Gastrocnemius medialis (tissue), 4 donors: ENCODE measurements at regions of chr9 and their contacts with region 1.

Region 1: GRCh38 chr9:107489687-107490605 is at the start of gene KLF4:
- DNase-seq: peak; percentile 89 to 91
- ATAC-seq: peak; percentile 82 to 84
- H3K4me3 ChIP-seq: peak within 1 kb of the TSS; percentile 75 to 91 (median 82)
- H3K27ac ChIP-seq: peak within 1 kb of the TSS; percentile 82 to 90 (median 90)
- H3K4me1 ChIP-seq: peaks cover 8 to 9% of the 10 kb centered on the region in 2 donors
- H3K27me3 ChIP-seq: no peaks in the 10 kb centered on the region
- CTCF ChIP-seq: no peak
- POLR2A ChIP-seq: peak; percentile 94 to 95
- total RNA-seq, gene KLF4: 15.7 to 62.6 (median 32.4) TPM

Region 2: DNA sequence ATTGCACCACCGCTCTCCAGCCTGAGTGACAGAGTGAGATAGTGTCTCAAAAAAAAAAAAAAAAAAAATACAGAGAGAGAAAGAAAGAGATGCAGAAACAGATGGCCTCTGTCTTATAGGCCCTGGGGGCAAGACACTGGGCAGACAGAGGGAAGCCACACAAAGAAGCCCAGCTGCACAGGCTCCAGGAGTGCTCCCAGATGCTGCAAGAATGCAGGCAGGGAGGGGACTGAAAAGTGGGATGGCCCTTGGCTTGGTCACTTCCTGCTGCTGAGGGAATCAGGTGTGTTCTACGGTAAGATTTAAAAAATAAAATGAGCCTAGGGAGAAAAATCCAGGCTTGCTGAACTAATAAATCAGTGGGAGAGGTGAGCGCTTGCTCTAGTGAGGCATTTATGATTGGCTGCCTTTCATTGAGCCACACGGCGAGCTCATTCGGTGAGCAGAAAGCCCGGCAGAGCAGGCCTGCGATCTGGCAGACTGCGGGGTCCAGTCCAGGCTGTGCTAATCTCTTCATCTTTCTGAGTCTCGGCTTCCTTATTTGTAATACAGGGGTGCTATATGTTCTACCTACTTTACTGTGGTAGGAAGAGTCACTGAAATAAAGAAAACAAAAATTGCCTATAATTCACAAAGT is 126.3 kb before region 1 on chr9:
- in situ Hi-C with region 1: no loop called
- intact Hi-C with region 1: no loop called
- DNase-seq: no peak
- ATAC-seq: no peak
- H3K4me3 ChIP-seq: no peak overlapping the region
- H3K27ac ChIP-seq: no peak overlapping the region
- H3K4me1 ChIP-seq: no peaks in the 10 kb centered on the region
- H3K27me3 ChIP-seq: no peaks in the 10 kb centered on the region
- CTCF ChIP-seq: no peak
- POLR2A ChIP-seq: no peak

Region 3: GRCh38 chr9:107409581-107410387 is 80.2 kb before region 1 on chr9:
- in situ Hi-C with region 1: no loop called
- intact Hi-C with region 1: no loop called
- DNase-seq: no peak
- ATAC-seq: no peak
- H3K4me3 ChIP-seq: no peak overlapping the region
- H3K27ac ChIP-seq: no peak overlapping the region
- H3K4me1 ChIP-seq: no peaks in the 10 kb centered on the region
- H3K27me3 ChIP-seq: no peaks in the 10 kb centered on the region
- CTCF ChIP-seq: no peak
- POLR2A ChIP-seq: no peak

Region 4: GRCh38 chr9:107637421-107638420 is 147.8 kb after region 1 on chr9:
- in situ Hi-C with region 1: loop called in 3 of 4 experiments (anchors 5 to 25 kb)
- intact Hi-C with region 1: loop called (anchors 1 kb)
- DNase-seq: peak; percentile 87 to 93
- ATAC-seq: peak; percentile 89 to 91
- H3K4me3 ChIP-seq: peak overlapping the region; percentile 56 to 65 (median 56)
- H3K27ac ChIP-seq: peak overlapping the region; percentile 94 to 97 (median 96)
- H3K4me1 ChIP-seq: peaks cover 18 to 19% of the 10 kb centered on the region in 2 donors
- H3K27me3 ChIP-seq: no peaks in the 10 kb centered on the region
- CTCF ChIP-seq: peak; percentile 22 to 44 (median 27)
- POLR2A ChIP-seq: peak; percentile 98 to 99

Region 5: DNA sequence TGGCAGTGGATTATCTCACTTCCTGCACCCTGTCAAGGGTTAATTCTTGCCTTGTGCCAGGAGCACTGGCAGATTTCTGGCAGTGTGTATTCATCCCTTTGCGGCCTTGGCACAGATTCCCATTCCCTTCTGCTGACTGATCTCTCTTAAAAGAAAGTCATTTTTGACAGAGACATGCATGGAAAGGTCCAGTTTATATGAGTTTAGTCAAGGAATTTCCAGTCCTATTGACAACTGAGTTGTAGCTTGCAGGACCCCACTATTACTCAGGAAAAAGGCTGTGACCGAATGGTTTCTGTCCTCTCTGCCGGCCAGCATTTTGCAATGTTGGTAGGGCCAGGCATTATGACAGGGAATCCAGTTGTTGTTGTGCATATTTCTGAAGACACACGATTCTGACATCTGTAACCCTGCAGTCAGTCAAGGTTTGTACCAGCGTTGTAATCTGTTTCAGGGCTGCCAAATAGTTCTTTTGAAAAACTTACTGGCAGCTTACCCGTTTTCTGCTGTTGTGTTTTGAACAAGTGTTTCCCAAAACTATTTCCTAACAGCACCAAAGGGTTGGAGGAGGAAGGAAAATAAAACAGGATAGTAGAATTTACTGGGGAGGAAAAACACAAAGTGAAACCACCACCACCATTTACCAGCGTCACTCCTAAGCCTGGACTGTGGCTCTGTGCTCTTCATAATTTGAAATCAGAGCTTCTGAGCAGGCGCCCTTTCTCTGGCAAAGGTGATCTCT is 243.0 kb after region 1 on chr9:
- in situ Hi-C with region 1: loop called (anchors 25 kb)
- intact Hi-C with region 1: loop called (anchors 2 kb)
- DNase-seq: peak; percentile 54 to 75
- ATAC-seq: peak; percentile 79 to 82
- H3K4me3 ChIP-seq: peak overlapping the region; percentile 32 to 42 (median 36)
- H3K27ac ChIP-seq: peak overlapping the region; percentile 78 to 88 (median 86)
- H3K4me1 ChIP-seq: peaks cover 17 to 19% of the 10 kb centered on the region in 2 donors
- H3K27me3 ChIP-seq: no peaks in the 10 kb centered on the region
- CTCF ChIP-seq: no peak
- POLR2A ChIP-seq: no peak

Region 6: GRCh38 chr9:108053555-108054061 is 563.7 kb after region 1 on chr9:
- in situ Hi-C with region 1: no loop called
- intact Hi-C with region 1: loop called (anchors 5 kb)
- DNase-seq: peak; percentile 68 to 73
- ATAC-seq: peak; percentile 72 to 84
- H3K4me3 ChIP-seq: peak overlapping the region; percentile 7 to 48 (median 22)
- H3K27ac ChIP-seq: peak overlapping the region; percentile 43 to 74 (median 63)
- H3K4me1 ChIP-seq: peaks cover 38 to 41% of the 10 kb centered on the region in 2 donors
- H3K27me3 ChIP-seq: no peaks in the 10 kb centered on the region
- CTCF ChIP-seq: no peak
- POLR2A ChIP-seq: no peak

Region 7: DNA sequence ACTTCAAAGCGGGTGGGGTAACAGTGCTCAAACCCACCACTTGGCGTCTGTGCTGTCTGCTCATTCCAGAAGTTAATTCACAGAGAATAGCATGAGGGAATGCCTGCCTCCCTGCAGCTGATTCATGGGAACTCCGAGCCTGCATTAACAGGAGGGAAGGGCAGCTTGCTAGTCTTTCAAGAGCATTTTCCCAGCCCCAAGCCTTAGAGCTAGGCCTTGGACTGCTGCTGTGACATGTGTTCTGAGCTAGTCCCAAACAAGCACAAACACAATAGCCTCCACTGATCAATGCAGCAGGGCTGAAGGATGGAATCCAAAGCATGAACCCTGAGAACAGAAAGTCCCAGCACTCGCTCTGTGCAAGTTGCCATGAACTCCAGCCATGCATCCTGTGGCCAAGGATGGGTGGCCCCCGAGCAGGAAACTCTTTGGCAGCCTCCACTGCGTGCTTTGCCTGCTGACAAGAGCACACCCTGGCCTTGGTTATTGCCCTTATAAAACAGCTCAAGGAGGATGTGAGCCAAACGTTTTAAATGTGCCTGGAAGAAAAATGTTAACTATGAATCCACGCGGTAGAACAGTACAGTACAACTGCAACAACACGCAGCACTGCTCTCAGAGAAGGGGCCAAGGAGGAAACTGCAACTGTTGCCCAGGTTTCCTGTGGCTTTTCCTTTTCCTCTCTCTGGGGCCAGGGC is 652.7 kb after region 1 on chr9:
- in situ Hi-C with region 1: no loop called
- intact Hi-C with region 1: loop called (anchors 2 kb)
- DNase-seq: peak; percentile 75 to 83
- ATAC-seq: peak; percentile 93 to 96
- H3K4me3 ChIP-seq: no peak overlapping the region
- H3K27ac ChIP-seq: peak overlapping the region; percentile 68 to 81 (median 78)
- H3K4me1 ChIP-seq: peaks cover 17 to 30% of the 10 kb centered on the region in 2 donors
- H3K27me3 ChIP-seq: no peaks in the 10 kb centered on the region
- CTCF ChIP-seq: no peak
- POLR2A ChIP-seq: no peak

Region 8: DNA sequence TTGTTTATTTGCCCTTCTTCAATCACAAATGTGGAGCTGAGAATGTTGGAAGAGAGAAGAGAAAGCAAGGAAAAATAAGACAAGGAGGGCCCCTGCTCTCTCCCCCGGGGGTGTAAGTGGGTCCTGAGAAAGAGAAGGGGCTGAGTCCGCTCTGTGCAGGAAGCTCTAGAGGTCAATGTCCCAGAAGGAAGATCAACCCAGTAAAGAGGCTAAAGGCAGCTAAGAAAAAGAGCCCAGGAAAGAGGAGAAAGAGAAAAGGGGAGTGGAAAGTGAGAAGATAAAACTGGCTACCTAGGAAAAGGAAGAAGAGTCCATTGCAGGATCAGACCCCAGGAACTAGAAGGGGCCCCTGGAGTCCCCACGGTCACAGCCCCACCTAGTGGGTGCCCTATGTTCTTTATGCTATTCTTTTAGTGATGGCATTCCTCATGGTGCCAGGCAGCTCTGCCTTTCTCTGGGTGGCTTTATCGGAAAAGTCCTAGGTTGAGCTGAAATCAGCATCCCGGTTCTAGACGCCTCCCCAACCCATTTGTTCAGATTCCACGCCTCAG is 782.5 kb after region 1 on chr9:
- in situ Hi-C with region 1: no loop called
- intact Hi-C with region 1: loop called (anchors 2 kb)
- DNase-seq: peak; percentile 6 to 50
- ATAC-seq: peak; percentile 59 to 87
- H3K4me3 ChIP-seq: peak overlapping the region; percentile 2 to 33 (median 26)
- H3K27ac ChIP-seq: peak overlapping the region; percentile 41 to 65 (median 50)
- H3K4me1 ChIP-seq: peaks cover 9 to 13% of the 10 kb centered on the region in 2 donors
- H3K27me3 ChIP-seq: no peaks in the 10 kb centered on the region
- CTCF ChIP-seq: peak; percentile 32 to 71 (median 57)
- POLR2A ChIP-seq: no peak

Region 9: DNA sequence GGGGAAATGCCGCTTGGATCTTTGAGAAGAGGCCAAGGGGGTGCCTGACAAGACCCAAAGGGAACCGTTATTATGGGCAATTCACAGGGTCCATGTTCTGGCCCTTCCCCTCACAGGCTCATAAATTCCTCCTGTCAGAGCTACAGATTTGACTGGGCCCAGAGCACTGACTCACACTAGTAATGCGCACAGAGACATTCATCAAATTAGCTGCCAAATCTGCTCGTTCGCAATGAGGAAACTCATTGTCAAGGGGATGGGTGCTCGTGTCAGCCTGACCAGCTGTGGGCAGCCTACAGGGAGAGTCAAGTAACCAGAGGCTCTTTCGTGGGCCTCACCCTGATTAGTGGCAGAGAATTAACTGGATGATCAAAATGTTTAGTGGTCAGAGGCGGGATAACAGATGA is 988.5 kb after region 1 on chr9:
- in situ Hi-C with region 1: no loop called
- intact Hi-C with region 1: loop called (anchors 5 kb)
- DNase-seq: peak; percentile 60 to 71
- ATAC-seq: peak; percentile 72 to 79
- H3K4me3 ChIP-seq: no peak overlapping the region
- H3K27ac ChIP-seq: peak overlapping the region; percentile 75 to 90 (median 84)
- H3K4me1 ChIP-seq: peaks cover 37 to 60% of the 10 kb centered on the region in 2 donors
- H3K27me3 ChIP-seq: no peaks in the 10 kb centered on the region
- CTCF ChIP-seq: peak in 2 of 5 experiments; percentile 30 to 33
- POLR2A ChIP-seq: no peak